Endothelial cell of umbilical vein (primary cell): ENCODE measurements at regions of chr5 and their contacts with region 1.

Region 1: DNA sequence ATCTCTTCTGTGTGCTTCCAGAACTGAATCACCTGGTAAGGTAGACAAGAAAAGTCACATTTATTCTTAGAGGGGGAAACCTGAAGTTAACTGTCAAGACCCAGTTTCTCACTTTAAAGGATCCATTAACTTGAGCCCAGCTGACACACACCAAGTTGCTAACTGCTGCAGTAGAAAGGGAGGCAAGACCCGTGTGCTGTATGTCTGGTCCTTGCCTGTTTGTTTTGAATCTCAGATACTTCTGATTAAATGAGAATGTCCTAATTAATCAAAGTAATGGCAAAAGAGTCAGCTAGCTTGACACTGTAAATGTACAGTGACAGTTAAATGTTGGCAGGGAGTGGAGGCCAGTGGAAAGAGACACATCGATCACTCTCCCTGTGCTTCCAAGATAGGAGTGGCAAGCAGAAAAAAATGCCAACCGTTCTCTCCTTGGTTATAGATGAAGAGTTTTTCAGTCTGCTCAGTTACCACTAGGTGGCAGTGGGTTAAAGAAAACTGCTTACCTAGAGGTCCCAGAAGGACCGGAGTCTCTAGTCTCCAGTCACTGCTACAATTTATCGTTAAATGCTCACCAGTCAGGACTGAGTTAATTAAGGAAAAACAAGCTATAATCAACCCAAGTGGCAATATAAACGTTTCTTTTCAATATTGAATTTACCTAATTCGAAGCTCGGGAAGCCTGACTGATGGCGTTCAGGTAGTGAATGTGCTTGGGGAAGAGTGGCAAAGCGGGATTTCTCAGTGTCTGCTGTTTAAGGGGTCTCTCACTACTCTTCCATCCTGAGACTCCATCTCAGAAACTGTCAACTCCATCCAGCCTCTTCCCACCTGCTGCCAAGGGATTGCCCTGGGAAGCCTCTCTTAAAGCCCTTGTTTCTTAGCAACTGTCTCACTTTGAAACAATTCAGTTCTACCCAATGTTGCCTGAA is 18.4 kb downstream of the LSM11 start:
- DNase-seq: peak; percentile 67
- H3K4me3 ChIP-seq: no peak overlapping the region
- H3K27ac ChIP-seq: no peak overlapping the region
- H3K4me1 ChIP-seq: no peaks in the 10 kb centered on the region
- H3K27me3 ChIP-seq: no peaks in the 10 kb centered on the region
- CTCF ChIP-seq: peak; percentile 71 to 79
- POLR2A ChIP-seq: no peak

Region 2: DNA sequence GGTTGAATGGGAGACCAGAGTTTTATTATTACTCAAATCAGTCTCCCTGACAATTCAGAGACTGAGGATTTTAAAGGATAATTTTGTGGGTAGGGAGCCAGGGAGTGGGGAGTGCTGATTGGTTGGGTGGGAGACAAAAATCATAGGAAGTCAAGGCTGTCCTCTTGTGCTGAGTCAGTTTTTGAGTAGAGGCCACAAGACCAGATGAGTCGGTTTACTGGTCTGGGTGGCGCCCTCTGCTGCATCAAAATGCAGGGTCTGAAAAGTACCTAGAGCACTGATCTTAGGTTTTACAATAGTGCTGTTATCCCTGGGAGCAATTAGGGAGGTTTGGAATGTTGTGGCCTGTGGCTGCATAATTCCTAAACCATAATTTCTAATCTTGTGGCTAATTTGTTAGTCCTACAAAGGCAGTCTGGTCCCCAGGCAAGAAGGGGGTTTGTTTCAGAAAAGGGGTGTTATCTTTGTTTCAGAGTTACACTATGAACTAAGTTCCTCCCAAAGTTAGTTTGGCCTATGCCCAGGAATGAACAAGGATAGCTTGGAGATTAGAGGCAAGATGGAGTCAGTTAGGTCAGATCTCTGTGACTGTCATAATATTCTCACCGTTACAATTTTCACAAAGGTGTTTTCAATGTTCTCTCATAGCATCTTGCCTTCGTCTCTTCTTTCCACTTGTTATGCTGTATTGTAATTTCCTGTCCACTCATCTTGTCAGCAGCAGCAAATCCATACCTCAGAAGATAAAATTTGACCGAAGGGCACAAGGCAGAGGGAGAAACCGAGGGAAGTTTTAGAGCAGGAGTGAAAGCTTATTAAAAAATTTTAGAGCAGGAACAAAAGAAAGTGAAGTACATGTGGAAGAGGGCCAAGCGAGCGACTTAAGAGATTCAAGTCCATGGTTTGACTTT is 156.2 kb after region 1 on chr5:
- CTCF ChIA-PET with region 1: interaction called, 3 read pairs
- POLR2A ChIA-PET with region 1: no interaction called
- dilution Hi-C with region 1: no loop called
- intact Hi-C with region 1: loop called (anchors 1 kb)
- DNase-seq: peak; percentile 74
- H3K4me3 ChIP-seq: no peak overlapping the region
- H3K27ac ChIP-seq: no peak overlapping the region
- H3K4me1 ChIP-seq: peaks cover 8% of the 10 kb centered on the region
- H3K27me3 ChIP-seq: no peaks in the 10 kb centered on the region
- CTCF ChIP-seq: peak; percentile 57 to 64
- POLR2A ChIP-seq: no peak

Region 3: GRCh38 chr5:157994906-157995519 is 233.1 kb after region 1 on chr5:
- CTCF ChIA-PET with region 1: interaction called, 29 read pairs
- POLR2A ChIA-PET with region 1: no interaction called
- dilution Hi-C with region 1: no loop called
- intact Hi-C with region 1: loop called (anchors 1 kb)
- DNase-seq: peak; percentile 63
- H3K4me3 ChIP-seq: no peak overlapping the region
- H3K27ac ChIP-seq: no peak overlapping the region
- H3K4me1 ChIP-seq: no peaks in the 10 kb centered on the region
- H3K27me3 ChIP-seq: no peaks in the 10 kb centered on the region
- CTCF ChIP-seq: peak; percentile 63 to 79
- POLR2A ChIP-seq: no peak